Activated naive CD4-positive, alpha-beta T cell treated with anti-CD3 and anti-CD28 coated beads for 36 hours (primary cell): ENCODE measurements at regions of chr15 and their contacts with region 1.

Region 1: GRCh38 chr15:69468241-69469121 is 15.9 kb downstream of the RPLP1 start:
- DNase-seq: peak; percentile 89
- H3K4me3 Mint-ChIP-seq: peak overlapping the region; percentile 25
- H3K27ac Mint-ChIP-seq: peak overlapping the region; percentile 75
- H3K4me1 Mint-ChIP-seq: peaks cover 27% of the 10 kb centered on the region
- H3K27me3 Mint-ChIP-seq: no peaks in the 10 kb centered on the region

Region 2: DNA sequence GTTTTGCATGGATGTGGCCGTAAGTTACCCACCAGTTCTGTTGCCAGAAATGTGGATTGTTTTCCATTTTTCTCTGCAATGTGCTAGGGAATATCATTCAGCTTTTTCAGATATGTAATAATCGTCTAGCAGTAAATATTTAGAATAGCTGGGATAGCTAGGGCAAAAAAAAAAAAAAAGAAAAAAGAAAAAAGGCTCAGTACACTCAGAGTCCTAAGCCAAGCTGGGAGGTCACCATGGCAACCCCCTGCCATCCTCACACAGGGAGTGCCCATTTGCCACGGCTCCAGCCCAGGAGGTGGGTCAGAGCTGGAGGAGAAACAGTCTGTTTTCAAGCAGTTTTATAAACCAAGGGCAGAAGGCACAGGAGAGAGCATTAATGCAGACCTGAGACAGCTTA is 144.5 kb before region 1 on chr15:
- CTCF ChIA-PET with region 1: no interaction called
- intact Hi-C with region 1: loop called (anchors 1 kb)
- DNase-seq: no peak
- H3K4me3 Mint-ChIP-seq: no peak overlapping the region
- H3K27ac Mint-ChIP-seq: no peak overlapping the region
- H3K4me1 Mint-ChIP-seq: peaks cover 20% of the 10 kb centered on the region
- H3K27me3 Mint-ChIP-seq: peaks cover 12% of the 10 kb centered on the region

Region 3: DNA sequence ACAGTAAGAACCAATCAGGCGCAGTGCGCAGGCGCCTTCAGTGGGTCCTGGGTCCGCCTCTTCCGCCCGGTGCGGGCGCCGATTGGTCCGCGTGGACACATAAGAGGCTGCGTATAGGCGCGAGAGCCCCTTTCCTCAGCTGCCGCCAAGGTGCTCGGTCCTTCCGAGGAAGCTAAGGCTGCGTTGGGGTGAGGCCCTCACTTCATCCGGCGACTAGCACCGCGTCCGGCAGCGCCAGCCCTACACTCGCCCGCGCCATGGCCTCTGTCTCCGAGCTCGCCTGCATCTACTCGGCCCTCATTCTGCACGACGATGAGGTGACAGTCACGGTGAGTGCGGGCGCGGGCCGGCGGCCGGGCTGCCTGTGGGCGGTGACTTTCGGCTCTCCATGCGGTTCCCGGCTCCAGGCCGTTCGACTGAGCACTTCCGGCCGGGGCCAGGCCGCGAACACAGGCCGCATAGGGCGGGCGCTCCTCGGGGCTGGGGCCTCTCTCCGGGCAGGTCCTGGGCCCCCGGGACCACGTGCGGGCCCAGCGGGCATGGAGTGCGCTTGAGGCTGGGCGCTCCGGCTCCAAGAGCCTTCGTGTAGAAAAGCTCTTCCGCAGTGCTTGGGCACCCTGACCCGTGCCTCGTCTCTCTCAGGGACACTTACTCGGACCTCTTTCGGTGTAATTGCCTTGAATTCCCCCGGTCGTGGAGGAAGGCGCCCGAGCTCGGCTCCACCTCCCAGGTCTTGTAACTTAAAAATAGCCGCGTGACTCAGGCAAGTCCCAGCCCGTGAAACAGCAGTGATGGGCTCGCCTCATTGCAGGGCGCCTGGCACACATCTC is 15.6 kb before region 1 on chr15 and contains the start of gene RPLP1:
- CTCF ChIA-PET with region 1: interaction called, 21 read pairs
- intact Hi-C with region 1: loop called (anchors 1 kb)
- DNase-seq: peak; percentile 95
- H3K4me3 Mint-ChIP-seq: peak within 1 kb of the TSS; percentile 99
- H3K27ac Mint-ChIP-seq: peak within 1 kb of the TSS; percentile 99
- H3K4me1 Mint-ChIP-seq: peaks cover 27% of the 10 kb centered on the region
- H3K27me3 Mint-ChIP-seq: no peaks in the 10 kb centered on the region
- total RNA-seq, gene RPLP1: 2,674 to 2,950 TPM

Region 4: GRCh38 chr15:69719527-69720240 is 251.2 kb after region 1 on chr15:
- CTCF ChIA-PET with region 1: interaction called, 3 read pairs
- intact Hi-C with region 1: loop called (anchors 2 kb)
- DNase-seq: peak; percentile 78
- H3K4me3 Mint-ChIP-seq: no peak overlapping the region
- H3K27ac Mint-ChIP-seq: peak overlapping the region; percentile 33
- H3K4me1 Mint-ChIP-seq: peaks cover 79% of the 10 kb centered on the region
- H3K27me3 Mint-ChIP-seq: no peaks in the 10 kb centered on the region